ENCODE measurements at regions of chr4 and their contacts with region 1.

Region 1: DNA sequence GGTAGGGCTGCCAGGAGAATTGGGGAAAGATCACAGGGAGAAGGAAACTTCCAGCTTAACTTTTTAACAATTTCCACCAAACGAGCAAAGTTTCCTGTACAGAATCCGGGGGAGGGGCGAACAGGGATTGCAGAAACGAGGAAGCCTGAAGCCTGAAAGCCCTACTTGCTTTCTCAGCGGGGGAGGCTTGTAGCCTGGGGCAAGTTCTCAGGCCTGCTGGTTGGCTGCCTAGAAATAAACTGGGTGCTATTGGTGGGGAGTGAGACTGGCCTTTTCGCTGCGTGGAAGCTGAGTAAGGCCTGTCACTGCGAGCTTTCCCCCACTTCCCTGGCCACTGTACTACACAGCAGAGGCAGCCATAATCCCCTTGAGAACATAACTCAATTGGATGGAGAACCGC is 110.8 kb upstream of the ATP8A1 start:
- H3K4me3 ChIP-seq: no peak overlapping the region
- H3K27ac ChIP-seq: no peak overlapping the region
- H3K4me1 ChIP-seq: no peaks in the 10 kb centered on the region
- CTCF ChIP-seq: no peak

Region 2: GRCh38 chr4:42605264-42605663 is 162.4 kb before region 1 on chr4:
- CTCF ChIA-PET with region 1: interaction called, 10 read pairs
- POLR2A ChIA-PET with region 1: no interaction called
- H3K4me3 ChIP-seq: no peak overlapping the region
- H3K27ac ChIP-seq: no peak overlapping the region
- H3K4me1 ChIP-seq: 0 out of 2 replicates have a peak, but pooled peaks cover 2% of the 10 kb centered on the region
- CTCF ChIP-seq: no peak

Region 3: GRCh38 chr4:42703813-42704212 is 63.9 kb before region 1 on chr4:
- CTCF ChIA-PET with region 1: no interaction called
- POLR2A ChIA-PET with region 1: no interaction called
- H3K4me3 ChIP-seq: no peak overlapping the region
- H3K27ac ChIP-seq: no peak overlapping the region
- H3K4me1 ChIP-seq: no peaks in the 10 kb centered on the region
- CTCF ChIP-seq: no peak

Region 4: GRCh38 chr4:42985976-42986375 is 218.3 kb after region 1 on chr4:
- CTCF ChIA-PET with region 1: no interaction called
- POLR2A ChIA-PET with region 1: no interaction called
- H3K4me3 ChIP-seq: no peak overlapping the region
- H3K27ac ChIP-seq: no peak overlapping the region
- H3K4me1 ChIP-seq: no peaks in the 10 kb centered on the region
- CTCF ChIP-seq: no peak

Measured in HEK293 (cell line).